CD8-positive, alpha-beta T cell (primary cell): ENCODE measurements at regions of chr20 and their contacts with region 1.

Region 1: DNA sequence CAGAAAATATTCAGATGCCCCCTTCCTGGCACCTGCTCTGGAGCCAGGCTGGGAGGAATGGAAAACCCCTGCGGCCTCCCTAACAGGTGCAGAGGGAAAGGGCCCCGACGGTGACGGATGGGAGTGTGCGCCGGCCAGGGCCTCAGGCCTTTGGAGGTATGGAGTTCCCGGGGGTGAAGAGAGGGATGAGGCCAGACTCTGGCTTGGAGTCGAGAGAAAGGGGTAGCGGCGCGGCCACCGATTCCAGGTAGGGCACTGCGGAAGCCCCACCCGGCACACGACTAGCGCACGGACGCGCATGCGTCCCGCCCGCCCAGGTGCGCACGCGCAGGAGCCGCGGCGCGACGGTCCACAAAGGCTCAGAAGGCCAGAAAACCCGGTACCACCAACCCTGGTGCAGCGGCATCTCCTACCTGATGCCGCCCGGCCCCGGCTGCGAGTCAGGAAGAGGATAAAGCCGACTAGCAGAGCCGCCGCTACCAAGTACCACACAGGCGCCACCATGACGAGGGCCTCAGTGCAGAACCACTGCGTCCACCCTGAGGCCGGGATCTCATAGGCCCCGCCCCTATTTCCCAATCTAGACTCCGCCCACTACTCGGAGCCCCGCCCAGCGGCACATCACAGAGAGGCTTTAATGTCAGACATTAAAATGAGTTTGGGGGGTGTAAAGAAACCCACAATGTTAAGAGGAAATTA is at the start of gene DDRGK1:
- DNase-seq: peak; percentile 82 to 95 (median 91)
- ATAC-seq: peak; percentile 87
- H3K4me3 ChIP-seq: peak within 1 kb of the TSS; percentile 87 to 98
- H3K4me3 Mint-ChIP-seq: peak within 1 kb of the TSS; percentile 95
- H3K27ac ChIP-seq: peak within 1 kb of the TSS; percentile 76 to 82
- H3K27ac Mint-ChIP-seq: peak within 1 kb of the TSS; percentile 97
- H3K4me1 ChIP-seq: peaks cover 26% of the 10 kb centered on the region
- H3K4me1 Mint-ChIP-seq: peaks cover 27% of the 10 kb centered on the region
- H3K27me3 ChIP-seq: no peaks in the 10 kb centered on the region
- H3K27me3 Mint-ChIP-seq: no peaks in the 10 kb centered on the region
- CTCF ChIP-seq: no peak
- total RNA-seq, gene DDRGK1: 40.6 to 43.5 TPM

Region 2: DNA sequence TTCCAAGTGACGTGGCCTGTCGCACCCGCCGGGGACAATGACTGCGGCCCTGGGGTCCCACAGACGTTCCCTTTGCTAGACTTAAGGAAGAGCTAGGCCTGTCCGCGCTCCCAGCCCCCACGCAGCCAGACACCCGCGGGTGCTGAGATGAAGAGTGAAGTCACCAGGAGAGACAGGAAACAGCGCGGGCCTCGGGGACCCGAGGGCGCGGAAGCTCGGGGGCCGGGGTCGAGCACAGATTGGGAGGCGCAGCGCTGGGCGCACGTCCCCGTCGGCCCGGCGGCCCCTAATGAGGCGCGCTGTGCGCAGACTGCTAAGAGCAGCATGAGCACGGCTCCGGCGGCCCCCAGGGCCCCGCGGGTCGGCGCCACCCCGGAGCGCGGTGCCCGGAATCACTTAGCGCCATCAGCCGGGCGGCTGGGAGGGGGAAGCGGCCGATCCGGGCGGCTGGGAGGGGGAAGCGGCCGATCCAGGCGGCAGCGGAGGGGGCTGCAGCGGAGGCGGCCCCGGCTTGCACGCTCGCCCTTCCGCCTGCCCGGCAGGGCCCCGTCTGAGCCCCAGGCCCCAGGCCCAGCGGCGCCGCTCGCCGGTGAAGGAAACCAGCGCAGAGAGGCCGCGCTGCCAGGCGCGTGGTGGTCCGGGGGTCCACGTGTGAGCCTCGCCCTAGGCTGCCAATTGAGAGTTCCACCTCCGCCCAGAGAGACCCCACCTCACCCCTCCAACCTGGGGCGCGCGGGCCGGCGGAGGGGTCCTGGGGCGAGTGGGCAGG is 111.5 kb before region 1 on chr20:
- CTCF ChIA-PET with region 1: no interaction called
- POLR2A ChIA-PET with region 1: no interaction called
- intact Hi-C with region 1: loop called in 1 of 2 experiments (anchors 1 kb)
- DNase-seq: peak; percentile 23 to 76 (median 52)
- ATAC-seq: peak; percentile 39
- H3K4me3 ChIP-seq: peak overlapping the region; percentile 33 to 61
- H3K4me3 Mint-ChIP-seq: peak overlapping the region; percentile 88
- H3K27ac ChIP-seq: peak overlapping the region; percentile 77 to 90
- H3K27ac Mint-ChIP-seq: peak overlapping the region; percentile 100
- H3K4me1 ChIP-seq: peaks cover 43% of the 10 kb centered on the region
- H3K4me1 Mint-ChIP-seq: peaks cover 29% of the 10 kb centered on the region
- H3K27me3 ChIP-seq: peaks cover 0 to 14% of the 10 kb centered on the region in 2 experiments
- H3K27me3 Mint-ChIP-seq: peaks cover 8% of the 10 kb centered on the region
- CTCF ChIP-seq: no peak

Region 3: DNA sequence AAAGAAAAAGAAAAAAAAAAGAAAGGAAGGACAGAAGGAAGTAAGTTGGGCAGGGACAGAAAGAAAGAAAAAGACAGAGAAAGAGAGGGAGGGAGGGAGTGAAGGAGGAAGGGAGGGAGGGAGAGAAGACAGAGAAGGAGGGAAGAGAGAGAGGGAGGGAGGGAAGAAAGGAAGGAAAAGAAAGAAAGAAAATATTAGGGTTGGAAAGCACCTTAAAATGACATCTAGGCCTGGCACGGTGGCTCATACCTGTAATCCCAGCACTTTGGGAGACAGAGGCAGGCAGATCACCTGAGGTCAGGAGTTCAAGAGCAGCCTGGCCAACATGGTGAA is 77.8 kb before region 1 on chr20:
- CTCF ChIA-PET with region 1: no interaction called
- POLR2A ChIA-PET with region 1: no interaction called
- intact Hi-C with region 1: loop called in 1 of 2 experiments (anchors 2 kb)
- DNase-seq: no peak
- ATAC-seq: no peak
- H3K4me3 ChIP-seq: no peak overlapping the region
- H3K4me3 Mint-ChIP-seq: no peak overlapping the region
- H3K27ac ChIP-seq: no peak overlapping the region
- H3K27ac Mint-ChIP-seq: no peak overlapping the region
- H3K4me1 ChIP-seq: peaks cover 24% of the 10 kb centered on the region
- H3K4me1 Mint-ChIP-seq: peaks cover 22% of the 10 kb centered on the region
- H3K27me3 ChIP-seq: no peaks in the 10 kb centered on the region
- H3K27me3 Mint-ChIP-seq: no peaks in the 10 kb centered on the region
- CTCF ChIP-seq: no peak

Region 4: GRCh38 chr20:3173610-3174441 is 30.4 kb before region 1 on chr20:
- CTCF ChIA-PET with region 1: no interaction called
- POLR2A ChIA-PET with region 1: interaction called, 4 read pairs
- intact Hi-C with region 1: loop called (anchors 1 kb)
- DNase-seq: peak; percentile 45 to 95 (median 90)
- ATAC-seq: peak; percentile 10
- H3K4me3 ChIP-seq: peak overlapping the region; percentile 81 to 96
- H3K4me3 Mint-ChIP-seq: peak overlapping the region; percentile 82
- H3K27ac ChIP-seq: peak overlapping the region in 1 of 2 experiments; percentile 97
- H3K27ac Mint-ChIP-seq: peak overlapping the region; percentile 62
- H3K4me1 ChIP-seq: peaks cover 13% of the 10 kb centered on the region
- H3K4me1 Mint-ChIP-seq: peaks cover 17% of the 10 kb centered on the region
- H3K27me3 ChIP-seq: peaks cover 0 to 7% of the 10 kb centered on the region in 2 experiments
- H3K27me3 Mint-ChIP-seq: peaks cover 10% of the 10 kb centered on the region
- CTCF ChIP-seq: no peak

Region 5: GRCh38 chr20:3239026-3239866 is 35.0 kb after region 1 on chr20 and contains the start of gene SLC4A11:
- CTCF ChIA-PET with region 1: no interaction called
- POLR2A ChIA-PET with region 1: interaction called, 3 read pairs
- intact Hi-C with region 1: loop called in 1 of 2 experiments (anchors 5 kb)
- DNase-seq: peak in 5 of 9 experiments; percentile 30 to 65 (median 54)
- ATAC-seq: peak; percentile 64
- H3K4me3 ChIP-seq: peak within 1 kb of the TSS; percentile 66 to 76
- H3K4me3 Mint-ChIP-seq: peak within 1 kb of the TSS; percentile 88
- H3K27ac ChIP-seq: no peak within 1 kb of the TSS
- H3K27ac Mint-ChIP-seq: no peak within 1 kb of the TSS
- H3K4me1 ChIP-seq: peaks cover 16% of the 10 kb centered on the region
- H3K4me1 Mint-ChIP-seq: peaks cover 15% of the 10 kb centered on the region
- H3K27me3 ChIP-seq: peaks cover 5 to 22% of the 10 kb centered on the region in 2 experiments
- H3K27me3 Mint-ChIP-seq: peaks cover 45% of the 10 kb centered on the region
- CTCF ChIP-seq: no peak
- total RNA-seq, gene SLC4A11: 0.65 to 0.78 TPM